Testis (tissue), 5 donors: ENCODE measurements at regions of chr6 and their contacts with region 1.

Region 1: GRCh38 chr6:32984605-32985389 is 16.4 kb downstream of the BRD2 start:
- DNase-seq: peak; percentile 96
- H3K4me3 ChIP-seq: no peak overlapping the region
- H3K27ac ChIP-seq: no peak overlapping the region
- H3K4me1 ChIP-seq: no peaks in the 10 kb centered on the region
- H3K27me3 ChIP-seq: no peaks in the 10 kb centered on the region
- CTCF ChIP-seq: peak; percentile 65 to 78 (median 69)
- POLR2A ChIP-seq: no peak

Region 2: DNA sequence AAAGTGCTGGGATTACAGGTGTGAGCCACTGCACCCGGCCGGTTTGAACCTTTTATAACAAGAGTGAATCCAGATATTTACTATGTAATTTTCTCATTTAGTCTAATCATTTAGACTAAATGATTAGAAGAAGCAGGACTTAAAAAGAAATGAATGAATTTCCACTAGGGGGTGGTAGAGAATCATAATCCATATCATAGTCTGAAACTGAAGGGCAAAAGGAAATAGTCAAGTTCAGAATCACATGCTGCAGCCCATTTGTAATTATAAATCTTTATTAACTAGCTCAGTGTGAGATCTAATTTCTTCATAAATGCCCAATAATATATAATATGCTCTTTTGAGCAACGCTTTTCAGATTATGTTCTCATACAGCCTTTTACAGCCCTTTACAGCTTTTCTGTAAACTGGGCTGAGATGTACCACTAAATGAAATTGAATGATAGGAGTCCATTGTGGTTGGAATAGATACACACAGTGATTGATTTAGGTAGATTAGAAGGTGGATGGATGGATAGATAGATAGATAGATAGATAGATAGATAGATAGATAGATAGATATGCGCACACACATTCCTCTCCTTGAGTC is 99.0 kb before region 1 on chr6:
- intact Hi-C with region 1: loop called (anchors 10 kb)
- DNase-seq: no peak
- H3K4me3 ChIP-seq: no peak overlapping the region
- H3K27ac ChIP-seq: no peak overlapping the region
- H3K4me1 ChIP-seq: peaks cover 9% of the 10 kb centered on the region
- H3K27me3 ChIP-seq: no peaks in the 10 kb centered on the region
- CTCF ChIP-seq: peak; percentile 54 to 82 (median 60)
- POLR2A ChIP-seq: no peak

Region 3: GRCh38 chr6:32933636-32934085 is 51.1 kb before region 1 on chr6:
- intact Hi-C with region 1: loop called (anchors 10 kb)
- DNase-seq: peak; percentile 87
- H3K4me3 ChIP-seq: no peak overlapping the region
- H3K27ac ChIP-seq: no peak overlapping the region
- H3K4me1 ChIP-seq: peaks cover 6% of the 10 kb centered on the region
- H3K27me3 ChIP-seq: no peaks in the 10 kb centered on the region
- CTCF ChIP-seq: peak; percentile 57 to 78 (median 72)
- POLR2A ChIP-seq: no peak

Region 4: DNA sequence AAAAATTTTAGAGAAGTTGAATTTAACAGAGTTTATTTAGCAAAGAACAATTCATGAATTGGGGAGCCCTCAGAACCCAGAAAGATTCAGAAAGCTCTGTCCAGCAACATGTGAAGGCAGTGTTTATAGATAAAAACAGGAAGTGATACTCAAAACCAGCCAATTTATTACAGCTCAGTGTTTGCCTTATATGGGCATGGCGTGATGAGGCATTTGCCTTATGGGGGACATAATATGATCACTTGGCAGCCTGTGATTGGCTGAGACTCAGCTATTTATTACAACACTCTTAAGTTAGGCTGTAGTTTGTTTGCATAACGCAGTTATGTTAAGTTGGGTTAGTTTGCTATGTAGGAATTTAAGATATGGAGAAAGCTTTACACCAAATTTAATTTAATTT is 77.2 kb after region 1 on chr6:
- intact Hi-C with region 1: no loop called
- DNase-seq: no peak
- H3K4me3 ChIP-seq: no peak overlapping the region
- H3K27ac ChIP-seq: no peak overlapping the region
- H3K4me1 ChIP-seq: no peaks in the 10 kb centered on the region
- H3K27me3 ChIP-seq: no peaks in the 10 kb centered on the region
- CTCF ChIP-seq: no peak
- POLR2A ChIP-seq: no peak